ENCODE measurements at regions of chr1 and their contacts with region 1.

Region 1: GRCh38 chr1:84653130-84653677 is 37.1 kb downstream of the SSX2IP start:
- DNase-seq: no peak
- H3K4me3 Mint-ChIP-seq: no peak overlapping the region
- H3K27ac Mint-ChIP-seq: no peak overlapping the region
- H3K4me1 Mint-ChIP-seq: no peaks in the 10 kb centered on the region
- H3K27me3 Mint-ChIP-seq: no peaks in the 10 kb centered on the region

Region 2: DNA sequence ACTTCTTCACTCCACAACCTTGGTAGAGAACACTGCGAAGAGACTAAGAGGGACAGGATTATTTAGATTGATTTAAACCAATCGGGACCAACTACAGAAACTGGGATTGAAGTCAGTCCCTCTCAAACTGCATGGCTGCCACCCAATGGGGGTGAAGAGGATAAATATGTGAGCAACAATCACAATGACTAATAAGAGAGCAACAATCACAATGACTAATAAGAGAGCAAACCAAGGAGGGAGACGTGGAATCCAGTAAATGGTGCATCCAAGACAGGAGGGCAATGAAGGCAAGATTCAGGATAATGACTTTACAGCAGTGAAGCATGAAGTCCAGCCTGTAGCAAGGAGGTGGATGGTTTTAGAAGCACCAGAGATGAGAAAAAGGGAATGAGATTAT is 977.1 kb before region 1 on chr1:
- intact Hi-C with region 1: loop called (anchors 5 kb)
- DNase-seq: no peak
- H3K4me3 Mint-ChIP-seq: no peak overlapping the region
- H3K27ac Mint-ChIP-seq: no peak overlapping the region
- H3K4me1 Mint-ChIP-seq: no peaks in the 10 kb centered on the region
- H3K27me3 Mint-ChIP-seq: no peaks in the 10 kb centered on the region

Region 3: GRCh38 chr1:84427520-84428188 is 225.6 kb before region 1 on chr1:
- intact Hi-C with region 1: no loop called
- DNase-seq: no peak
- H3K4me3 Mint-ChIP-seq: no peak overlapping the region
- H3K27ac Mint-ChIP-seq: no peak overlapping the region
- H3K4me1 Mint-ChIP-seq: no peaks in the 10 kb centered on the region
- H3K27me3 Mint-ChIP-seq: no peaks in the 10 kb centered on the region

Region 4: GRCh38 chr1:84573967-84574842 is 79.0 kb before region 1 on chr1 and contains the start of gene CTBS:
- intact Hi-C with region 1: no loop called
- DNase-seq: peak; percentile 76
- H3K4me3 Mint-ChIP-seq: peak within 1 kb of the TSS; percentile 98
- H3K27ac Mint-ChIP-seq: peak within 1 kb of the TSS; percentile 100
- H3K4me1 Mint-ChIP-seq: peaks cover 48% of the 10 kb centered on the region
- H3K27me3 Mint-ChIP-seq: peaks cover 2% of the 10 kb centered on the region
- total RNA-seq, gene CTBS: 14.2 and 14.5 TPM in 2 replicates

Region 5: DNA sequence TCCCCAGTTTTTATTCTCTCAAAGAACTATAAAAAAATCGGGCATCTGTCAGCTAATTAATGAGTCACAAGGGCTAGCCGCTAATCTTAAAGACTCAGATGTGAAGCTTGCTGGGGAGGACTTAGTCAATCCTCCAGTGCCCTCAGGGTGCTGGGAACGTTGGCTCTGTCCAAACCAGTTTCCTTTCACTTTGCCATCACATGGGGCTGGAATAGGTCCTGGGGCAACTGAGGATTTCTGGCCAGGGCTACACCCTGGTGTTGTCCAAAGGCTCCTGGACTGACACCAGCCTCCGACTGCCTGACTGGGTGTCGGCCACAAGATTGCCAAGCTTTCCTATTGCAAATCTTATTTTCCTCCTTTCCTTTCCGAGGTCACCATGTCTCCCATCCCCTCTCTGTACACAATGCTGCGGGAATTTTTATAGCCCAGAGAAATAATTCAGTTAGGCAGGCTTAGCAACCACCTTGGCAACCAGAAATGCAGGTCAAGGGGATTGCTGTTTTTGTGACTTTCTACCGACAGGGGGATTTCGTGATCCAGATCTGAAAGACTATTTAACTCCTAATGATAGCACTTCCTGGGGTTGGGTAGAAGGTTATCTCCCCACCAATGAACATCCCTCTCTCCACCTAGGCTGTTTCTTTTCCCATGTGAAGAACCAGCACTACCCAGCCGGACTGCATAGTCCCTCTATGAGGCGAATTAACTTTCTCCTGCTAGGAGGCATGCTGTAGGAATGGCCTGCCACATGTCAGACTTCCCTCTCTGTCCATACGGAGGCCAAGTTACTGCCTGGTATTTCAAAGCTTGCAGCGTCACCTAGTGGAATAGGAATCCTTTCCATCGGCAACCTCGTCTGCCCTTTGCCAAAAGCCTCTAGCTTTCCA is 49.0 kb before region 1 on chr1:
- intact Hi-C with region 1: no loop called
- DNase-seq: no peak
- H3K4me3 Mint-ChIP-seq: no peak overlapping the region
- H3K27ac Mint-ChIP-seq: no peak overlapping the region
- H3K4me1 Mint-ChIP-seq: peaks cover 16% of the 10 kb centered on the region
- H3K27me3 Mint-ChIP-seq: peaks cover 2% of the 10 kb centered on the region

Region 6: GRCh38 chr1:84632673-84633434 is 20.4 kb before region 1 on chr1:
- intact Hi-C with region 1: no loop called
- DNase-seq: no peak
- H3K4me3 Mint-ChIP-seq: no peak overlapping the region
- H3K27ac Mint-ChIP-seq: no peak overlapping the region
- H3K4me1 Mint-ChIP-seq: no peaks in the 10 kb centered on the region
- H3K27me3 Mint-ChIP-seq: peaks cover 18% of the 10 kb centered on the region

Measured in activated T-helper 1 cell treated with anti-CD3 and anti-CD28 coated beads, Interleukin-12 subunit alpha, Interleukin-12 subunit beta, Interleukin-2, Interleukin-4 antibody, amounts not matched to agents 30 ng/mL and 10 ng/mL and 1 ng/mL, durations not matched to agents 14 hours and 24 hours and 36 hours (primary cell).